ENCODE measurements at regions of chr6 and their contacts with region 1.

Region 1: GRCh38 chr6:26025894-26026832 is 61.1 kb upstream of the HFE start:
- DNase-seq: peak; percentile 95
- H3K4me3 ChIP-seq: peak overlapping the region; percentile 71
- H3K27ac ChIP-seq: peak overlapping the region; percentile 99
- H3K4me1 ChIP-seq: peaks cover 80% of the 10 kb centered on the region
- CTCF ChIP-seq: peak; percentile 88

Region 2: GRCh38 chr6:24520929-24521546 is 1505.1 kb before region 1 on chr6:
- CTCF ChIA-PET with region 1: no interaction called
- POLR2A ChIA-PET with region 1: interaction called, 3 read pairs
- intact Hi-C with region 1: loop called (anchors 10 kb)
- DNase-seq: peak; percentile 80
- H3K4me3 ChIP-seq: peak overlapping the region; percentile 20
- H3K27ac ChIP-seq: peak overlapping the region; percentile 98
- H3K4me1 ChIP-seq: peaks cover 79% of the 10 kb centered on the region
- CTCF ChIP-seq: peak; percentile 95

Region 3: DNA sequence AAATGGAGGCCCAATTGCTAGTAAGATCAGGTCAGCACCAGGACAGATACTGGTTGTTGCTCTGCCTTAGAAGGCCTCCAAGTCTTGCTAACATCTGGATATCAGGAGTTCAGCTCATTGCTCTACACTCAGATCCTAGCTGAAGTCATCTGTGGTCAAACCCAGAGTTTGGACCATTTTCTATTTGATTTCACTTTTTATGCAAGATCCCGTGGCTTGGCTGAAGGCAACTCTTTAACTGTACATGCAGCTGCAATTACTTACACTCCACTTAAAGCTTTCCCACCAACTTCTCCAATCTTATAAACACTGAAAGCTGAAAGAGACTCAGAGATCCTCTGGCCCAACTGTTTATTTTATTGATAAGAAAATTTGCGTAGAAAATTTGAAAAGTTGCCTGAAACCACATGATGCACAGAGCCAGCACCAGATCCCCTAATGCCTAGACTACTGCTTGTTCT is 98.4 kb before region 1 on chr6:
- CTCF ChIA-PET with region 1: no interaction called
- POLR2A ChIA-PET with region 1: no interaction called
- intact Hi-C with region 1: no loop called
- DNase-seq: no peak
- H3K4me3 ChIP-seq: no peak overlapping the region
- H3K27ac ChIP-seq: no peak overlapping the region
- H3K4me1 ChIP-seq: no peaks in the 10 kb centered on the region
- CTCF ChIP-seq: no peak

Region 4: DNA sequence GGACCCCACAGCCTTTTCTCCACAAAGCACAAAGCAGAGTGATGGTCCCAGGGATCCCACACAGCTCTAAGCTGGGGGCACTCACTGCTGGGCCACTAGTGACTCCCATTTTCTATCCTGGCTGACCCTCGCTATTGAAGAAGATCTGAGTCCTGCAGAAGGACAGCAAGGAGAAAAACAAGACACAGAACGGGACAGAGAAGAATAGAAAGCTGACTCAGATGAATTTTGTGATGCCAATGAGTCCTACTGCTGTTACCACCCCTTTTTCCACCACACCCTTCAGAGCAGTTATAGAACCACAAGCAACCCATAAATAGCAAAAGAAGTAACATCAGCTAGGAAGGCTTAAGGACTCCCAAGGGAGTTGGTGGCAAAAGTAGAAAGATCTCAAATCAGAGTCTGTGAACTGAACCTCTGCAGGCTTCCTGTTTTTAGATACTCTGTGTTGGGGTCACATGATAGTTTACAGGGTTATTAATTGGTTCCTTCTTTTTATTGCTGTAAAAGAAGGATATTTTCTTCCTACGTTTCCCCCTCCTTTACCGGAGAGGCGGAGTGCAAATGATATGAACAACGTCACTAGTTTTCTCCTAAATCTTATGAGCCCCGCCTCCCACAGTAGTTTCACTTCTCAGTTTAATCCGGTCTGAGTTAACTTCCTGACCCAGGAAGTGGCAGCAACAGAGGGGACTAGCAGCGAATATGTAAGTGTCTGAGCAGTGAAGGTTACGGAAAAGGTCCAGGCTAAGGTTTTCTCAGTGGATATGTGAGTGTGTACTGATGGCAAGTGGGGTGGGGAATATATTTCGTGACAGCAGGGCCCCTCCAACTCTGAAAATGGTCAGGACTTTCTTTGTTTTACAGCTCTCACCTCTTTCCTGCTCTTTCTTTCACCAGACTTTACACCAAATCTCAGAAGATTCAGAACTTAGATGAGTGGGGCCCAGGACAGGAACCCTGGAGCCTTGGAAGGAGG is 63.7 kb before region 1 on chr6 and contains the start of gene TRIM38:
- CTCF ChIA-PET with region 1: no interaction called
- POLR2A ChIA-PET with region 1: interaction called, 24 read pairs
- intact Hi-C with region 1: loop called (anchors 1 kb)
- DNase-seq: peak; percentile 94
- H3K4me3 ChIP-seq: peak within 1 kb of the TSS; percentile 96
- H3K27ac ChIP-seq: peak within 1 kb of the TSS; percentile 94
- H3K4me1 ChIP-seq: peaks cover 56% of the 10 kb centered on the region
- CTCF ChIP-seq: no peak; the same call in 1 of the 2 replicates
- total RNA-seq, gene TRIM38: 11.9 and 12.8 TPM in 2 replicates

Region 5: DNA sequence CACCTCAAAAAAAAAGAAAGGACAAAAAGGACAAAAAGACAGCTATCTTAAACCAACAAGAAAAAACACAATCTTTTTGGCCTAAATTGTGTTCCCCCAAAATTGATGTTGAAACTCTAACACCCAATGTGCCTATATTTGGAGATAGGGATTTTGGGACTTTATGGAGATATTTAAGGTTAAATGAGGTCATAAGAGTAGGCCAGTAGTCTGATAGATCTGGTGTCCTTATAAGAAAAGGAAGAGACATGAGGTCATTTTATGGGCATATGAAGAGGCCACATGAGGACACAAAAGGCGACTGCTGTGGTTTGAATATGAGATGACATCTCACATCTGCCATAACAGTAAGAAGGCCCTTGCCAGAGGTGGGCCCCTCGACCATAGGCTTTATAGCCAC is 14.1 kb before region 1 on chr6:
- CTCF ChIA-PET with region 1: no interaction called
- POLR2A ChIA-PET with region 1: interaction called, 43 read pairs
- intact Hi-C with region 1: no loop called
- DNase-seq: no peak
- H3K4me3 ChIP-seq: no peak overlapping the region
- H3K27ac ChIP-seq: no peak overlapping the region
- H3K4me1 ChIP-seq: peaks cover under 1% of the 10 kb centered on the region
- CTCF ChIP-seq: no peak

Region 6: GRCh38 chr6:26122793-26123674 is 96.9 kb after region 1 on chr6:
- CTCF ChIA-PET with region 1: no interaction called
- POLR2A ChIA-PET with region 1: interaction called, 85 read pairs
- intact Hi-C with region 1: no loop called
- DNase-seq: peak; percentile 99
- H3K4me3 ChIP-seq: peak overlapping the region; percentile 72
- H3K27ac ChIP-seq: peak overlapping the region; percentile 99
- H3K4me1 ChIP-seq: peaks cover 60% of the 10 kb centered on the region
- CTCF ChIP-seq: no peak

Region 7: DNA sequence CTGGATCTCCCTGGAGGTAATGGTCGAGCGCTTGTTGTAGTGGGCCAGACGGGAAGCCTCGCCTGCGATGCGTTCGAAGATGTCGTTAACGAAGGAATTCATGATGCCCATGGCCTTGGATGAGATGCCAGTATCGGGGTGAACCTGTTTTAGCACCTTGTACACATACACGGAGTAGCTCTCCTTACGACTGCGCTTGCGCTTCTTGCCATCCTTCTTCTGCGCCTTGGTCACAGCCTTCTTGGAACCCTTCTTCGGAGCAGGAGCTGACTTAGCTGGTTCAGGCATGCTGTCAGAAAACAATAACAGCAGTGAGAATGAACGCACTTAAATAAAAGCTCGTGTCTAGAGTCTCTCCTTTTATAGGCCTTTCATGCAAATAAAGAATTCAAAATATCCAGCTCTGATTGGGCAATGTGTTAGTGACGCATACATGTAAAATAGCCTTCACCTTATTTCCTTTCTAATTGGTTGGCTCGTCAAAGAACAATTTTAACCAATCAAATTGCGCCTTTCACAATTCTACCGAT is 190.3 kb after region 1 on chr6:
- CTCF ChIA-PET with region 1: no interaction called
- POLR2A ChIA-PET with region 1: interaction called, 73 read pairs
- intact Hi-C with region 1: loop called (anchors 5 kb)
- DNase-seq: peak; percentile 98
- H3K4me3 ChIP-seq: peak overlapping the region; percentile 79
- H3K27ac ChIP-seq: peak overlapping the region; percentile 99
- H3K4me1 ChIP-seq: peaks cover 63% of the 10 kb centered on the region
- CTCF ChIP-seq: no peak

Region 8: DNA sequence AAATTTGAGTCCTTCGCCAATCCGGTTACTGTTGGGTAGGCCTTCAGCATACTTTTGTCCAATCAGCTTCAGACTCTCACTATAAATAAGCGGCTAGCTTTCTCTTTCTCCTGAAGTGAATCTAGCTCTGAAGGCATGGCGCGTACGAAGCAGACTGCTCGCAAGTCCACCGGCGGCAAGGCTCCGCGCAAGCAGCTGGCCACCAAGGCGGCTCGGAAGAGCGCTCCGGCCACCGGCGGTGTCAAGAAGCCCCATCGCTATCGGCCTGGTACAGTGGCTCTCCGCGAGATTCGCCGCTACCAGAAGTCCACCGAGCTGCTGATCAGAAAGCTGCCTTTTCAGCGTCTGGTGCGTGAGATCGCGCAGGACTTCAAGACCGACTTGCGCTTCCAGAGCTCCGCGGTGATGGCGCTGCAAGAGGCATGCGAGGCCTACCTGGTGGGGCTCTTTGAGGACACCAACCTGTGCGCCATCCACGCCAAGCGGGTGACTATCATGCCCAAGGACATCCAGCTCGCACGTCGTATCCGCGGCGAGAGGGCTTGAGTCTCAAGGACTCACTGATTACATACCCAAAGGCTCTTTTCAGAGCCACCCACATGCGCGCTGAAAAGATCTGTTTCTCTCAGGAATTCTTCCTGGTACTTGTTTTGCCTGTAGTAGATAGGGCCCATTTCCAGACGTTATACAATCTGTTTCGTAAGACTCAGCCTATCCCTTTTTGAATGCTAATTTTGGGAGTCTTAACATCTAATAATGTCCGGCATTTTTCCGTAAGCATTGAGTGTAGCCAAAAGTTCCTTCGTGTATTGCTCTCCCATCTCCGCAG is 1784.0 kb after region 1 on chr6:
- CTCF ChIA-PET with region 1: no interaction called
- POLR2A ChIA-PET with region 1: interaction called, 164 read pairs
- intact Hi-C with region 1: loop called (anchors 2 kb)
- DNase-seq: peak; percentile 96
- H3K4me3 ChIP-seq: peak overlapping the region; percentile 82
- H3K27ac ChIP-seq: peak overlapping the region; percentile 96
- H3K4me1 ChIP-seq: peaks cover 62% of the 10 kb centered on the region
- CTCF ChIP-seq: peak; percentile 12; the same call in 1 of the 2 replicates

Measured in OCI-LY7 (cell line).